T-cell (primary cell): ENCODE measurements at regions of chr20 and their contacts with region 1.

Region 1: DNA sequence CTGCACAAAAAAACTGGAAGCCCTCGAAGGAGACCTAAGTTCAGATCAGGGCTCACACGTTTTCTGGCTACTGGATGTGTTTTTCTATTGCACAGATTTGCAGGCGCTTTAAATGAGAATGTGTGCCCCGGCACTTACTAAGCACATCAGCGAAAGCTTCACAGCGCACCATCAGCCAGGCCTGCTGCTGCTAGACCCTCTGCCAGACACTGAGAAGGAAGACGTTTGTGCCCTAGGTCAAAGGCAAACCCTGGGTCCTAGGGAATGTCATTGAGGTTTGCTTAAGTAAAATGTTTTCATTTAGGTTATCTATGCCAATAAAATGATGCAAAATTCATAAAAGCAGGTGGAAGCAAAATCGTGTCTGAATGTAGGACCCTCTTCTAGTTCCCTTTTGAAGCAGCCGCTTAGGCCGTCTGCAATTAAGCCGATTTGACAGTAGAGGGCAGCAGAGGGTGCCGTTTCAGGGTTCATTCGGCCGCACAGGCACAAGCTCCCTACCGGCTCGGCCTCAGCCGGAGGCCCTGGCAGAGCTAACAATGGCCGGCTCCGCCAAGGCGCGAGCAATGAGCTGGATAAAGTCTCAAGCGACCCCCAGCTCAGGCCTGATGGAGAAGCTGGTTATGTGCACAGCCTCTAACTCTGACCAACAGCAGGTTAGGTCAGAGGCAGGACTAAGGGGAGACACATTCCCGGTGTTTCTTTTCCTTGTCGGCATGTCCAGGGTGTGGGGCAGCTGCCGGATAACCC is 107.2 kb upstream of the FOXA2 start:
- DNase-seq: peak in 26 of 35 experiments; percentile 3 to 55 (median 18)
- ATAC-seq: peak in 3 of 4 experiments; percentile 38 to 52 (median 50)
- H3K4me3 ChIP-seq: no peak overlapping the region
- H3K4me3 Mint-ChIP-seq: no peak overlapping the region
- H3K27ac ChIP-seq: no peak overlapping the region
- H3K27ac Mint-ChIP-seq: no peak overlapping the region
- H3K4me1 ChIP-seq: peaks cover 0 to 5% of the 10 kb centered on the region in 2 experiments
- H3K4me1 Mint-ChIP-seq: peaks cover 0 to 2% (median 0%) of the 10 kb centered on the region in 3 donors
- H3K27me3 ChIP-seq: peaks cover 0 to 9% of the 10 kb centered on the region in 2 experiments
- H3K27me3 Mint-ChIP-seq: peaks cover 3% of the 10 kb centered on the region in 2 donors

Region 2: DNA sequence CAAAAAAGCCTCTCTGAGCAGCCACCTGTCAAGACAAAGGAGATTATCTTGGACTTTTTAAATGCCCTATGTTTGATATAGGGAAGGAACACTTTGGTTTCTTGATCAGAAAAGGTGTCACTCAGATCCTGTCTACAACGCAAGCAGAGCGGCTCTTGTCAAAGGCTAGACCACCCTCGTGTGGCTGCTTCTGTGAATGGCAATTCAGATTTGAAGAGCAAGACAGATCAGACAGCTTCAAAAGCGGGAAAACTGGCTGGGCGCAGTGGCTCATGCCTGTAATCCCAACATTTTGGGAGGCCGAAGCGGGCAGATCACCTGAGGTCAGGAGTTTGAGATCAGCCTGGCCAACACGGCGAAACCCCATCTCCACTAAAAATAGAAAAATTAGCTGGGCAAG is 649.0 kb after region 1 on chr20:
- CTCF ChIA-PET with region 1: interaction called, 5 to 12 read pairs
- POLR2A ChIA-PET with region 1: no interaction called
- DNase-seq: peak in 10 of 35 experiments; percentile 11 to 45 (median 17)
- ATAC-seq: peak in 2 of 4 experiments; percentile 43 to 47
- H3K4me3 ChIP-seq: no peak overlapping the region
- H3K4me3 Mint-ChIP-seq: no peak overlapping the region
- H3K27ac ChIP-seq: no peak overlapping the region
- H3K27ac Mint-ChIP-seq: no peak overlapping the region
- H3K4me1 ChIP-seq: no peaks in the 10 kb centered on the region
- H3K4me1 Mint-ChIP-seq: no peaks in the 10 kb centered on the region
- H3K27me3 ChIP-seq: peaks cover 0 to 9% of the 10 kb centered on the region in 2 experiments
- H3K27me3 Mint-ChIP-seq: peaks cover 0 to 4% of the 10 kb centered on the region in 2 donors